PC-9 (cell line): ENCODE measurements at regions of chrX and their contacts with region 1.

Region 1: DNA sequence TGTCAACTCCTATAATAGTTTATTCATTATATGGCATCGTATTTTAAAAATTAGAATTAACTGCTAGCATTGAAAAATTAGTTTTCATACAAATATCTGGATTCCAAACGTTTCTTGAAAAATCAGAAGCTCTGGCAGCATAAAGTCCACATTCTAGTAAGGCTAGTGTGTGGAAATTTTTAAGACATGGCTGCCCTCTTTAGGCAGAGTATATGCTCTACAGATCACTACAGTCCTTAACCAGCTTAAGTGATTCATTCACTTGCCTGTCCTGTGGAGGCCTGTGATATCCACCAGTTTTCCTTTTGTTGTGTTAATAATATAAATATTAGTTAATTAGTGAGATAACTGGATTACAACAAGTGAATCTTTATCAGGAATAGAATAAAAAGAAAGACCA is 287.2 kb downstream of the OPHN1 start:
- DNase-seq: no peak
- H3K4me3 ChIP-seq: no peak overlapping the region
- H3K27ac ChIP-seq: no peak overlapping the region
- H3K4me1 ChIP-seq: no peaks in the 10 kb centered on the region
- H3K27me3 ChIP-seq: no peaks in the 10 kb centered on the region
- CTCF ChIP-seq: peak; percentile 52

Region 2: GRCh38 chrX:67555578-67556203 is 590.4 kb before region 1 on chrX:
- CTCF ChIA-PET with region 1: no interaction called
- POLR2A ChIA-PET with region 1: no interaction called
- intact Hi-C with region 1: loop called (anchors 10 kb)
- DNase-seq: no peak
- H3K4me3 ChIP-seq: no peak overlapping the region
- H3K27ac ChIP-seq: no peak overlapping the region
- H3K4me1 ChIP-seq: no peaks in the 10 kb centered on the region
- H3K27me3 ChIP-seq: no peaks in the 10 kb centered on the region
- CTCF ChIP-seq: peak; percentile 75

Region 3: GRCh38 chrX:68045008-68045577 is 101.0 kb before region 1 on chrX:
- CTCF ChIA-PET with region 1: no interaction called
- POLR2A ChIA-PET with region 1: no interaction called
- intact Hi-C with region 1: no loop called
- DNase-seq: no peak
- H3K4me3 ChIP-seq: no peak overlapping the region
- H3K27ac ChIP-seq: no peak overlapping the region
- H3K4me1 ChIP-seq: no peaks in the 10 kb centered on the region
- H3K27me3 ChIP-seq: no peaks in the 10 kb centered on the region
- CTCF ChIP-seq: no peak